Mammary epithelial cell (primary cell): ENCODE measurements at regions of chr6 and their contacts with region 1.

Region 1: DNA sequence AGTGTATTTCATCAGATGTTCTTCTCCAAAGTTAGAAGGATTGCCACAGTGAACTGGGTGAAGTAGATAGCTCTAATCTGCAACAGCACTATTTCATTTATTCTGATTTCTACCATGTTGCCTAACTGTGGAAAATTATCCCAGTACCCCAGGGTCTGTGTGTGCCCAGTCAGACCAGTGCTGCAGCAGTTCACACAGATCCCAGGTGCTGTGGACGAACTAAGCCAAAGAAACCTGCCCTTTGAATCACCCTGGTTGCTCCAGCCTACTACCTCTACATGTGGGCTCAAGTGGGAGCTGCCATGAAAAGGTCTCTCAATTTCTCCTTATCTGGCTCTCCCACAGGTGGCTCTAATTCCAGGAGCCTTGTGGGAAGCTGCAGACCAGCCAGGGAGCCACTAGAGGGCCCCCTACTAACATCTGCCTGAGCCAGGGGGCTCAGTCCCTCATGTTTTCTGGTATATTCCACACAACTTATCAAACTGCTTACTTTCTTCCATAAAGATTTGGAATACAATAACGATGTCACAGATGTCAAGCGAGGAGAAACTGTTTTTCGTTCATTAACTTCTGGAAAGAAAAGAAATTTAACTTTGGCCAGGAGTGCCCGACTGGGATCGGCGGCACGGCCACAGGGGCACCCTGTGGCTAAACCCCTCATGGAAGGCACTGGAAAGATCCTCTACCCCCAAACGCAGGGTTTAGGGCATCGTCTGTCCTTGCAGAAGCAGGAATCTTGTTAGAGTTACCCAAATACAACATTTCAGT is 31.6 kb upstream of the LY86 start:
- DNase-seq: no peak
- H3K4me3 ChIP-seq: no peak overlapping the region
- H3K27ac ChIP-seq: no peak overlapping the region
- H3K4me1 ChIP-seq: peaks cover 11% of the 10 kb centered on the region
- H3K27me3 ChIP-seq: no peaks in the 10 kb centered on the region
- CTCF ChIP-seq: peak; percentile 71 to 78

Region 2: DNA sequence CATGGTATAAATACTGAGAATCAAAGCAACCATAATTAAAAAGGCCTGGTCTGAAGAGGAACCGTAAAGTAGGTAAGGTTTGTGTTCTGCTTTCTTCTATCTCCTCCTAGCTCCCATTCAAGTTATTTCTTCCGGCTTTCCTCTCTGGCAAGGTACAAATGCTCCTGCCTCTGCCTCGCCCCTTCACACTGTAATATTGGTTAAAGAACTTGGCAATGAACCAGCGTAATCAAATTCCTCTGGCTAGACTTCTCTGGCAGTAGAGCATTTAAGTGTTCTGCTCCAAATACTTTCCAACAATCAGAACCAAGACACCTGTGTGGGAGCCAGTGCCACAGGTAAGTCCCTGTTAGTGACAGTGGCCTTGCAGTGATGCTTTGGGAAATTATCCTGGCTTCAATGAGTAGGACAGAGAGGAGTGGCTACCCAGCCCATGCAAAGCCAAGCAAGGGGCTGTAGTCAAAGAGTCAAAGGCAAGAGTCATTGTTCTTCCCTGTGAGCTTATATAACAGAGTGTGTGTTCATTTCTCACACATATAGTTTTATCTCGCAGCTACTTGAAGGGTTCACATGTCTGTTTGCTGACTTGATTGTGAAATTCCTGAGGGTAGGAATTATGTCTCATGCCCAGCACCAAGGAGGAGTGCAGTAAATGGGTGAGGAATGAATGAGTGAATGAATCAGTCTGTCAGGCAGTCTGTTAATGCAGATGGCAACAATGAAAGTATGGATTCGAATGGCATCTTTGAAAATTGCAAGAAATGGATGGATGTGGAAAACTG is 879.5 kb before region 1 on chr6:
- CTCF ChIA-PET with region 1: no interaction called
- dilution Hi-C with region 1: no loop called
- in situ Hi-C with region 1: no loop called
- intact Hi-C with region 1: loop called (anchors 5 kb)
- DNase-seq: peak; percentile 33
- H3K4me3 ChIP-seq: no peak overlapping the region
- H3K27ac ChIP-seq: peak overlapping the region; percentile 19
- H3K4me1 ChIP-seq: peaks cover 21% of the 10 kb centered on the region
- H3K27me3 ChIP-seq: no peaks in the 10 kb centered on the region
- CTCF ChIP-seq: peak in 1 of 2 donors; percentile 4

Region 3: GRCh38 chr6:7086488-7086887 is 529.6 kb after region 1 on chr6:
- CTCF ChIA-PET with region 1: no interaction called
- dilution Hi-C with region 1: no loop called
- in situ Hi-C with region 1: no loop called
- intact Hi-C with region 1: no loop called
- DNase-seq: no peak
- H3K4me3 ChIP-seq: peak overlapping the region in 2 of 3 experiments; percentile 26 to 43
- H3K27ac ChIP-seq: no peak overlapping the region
- H3K4me1 ChIP-seq: no peaks in the 10 kb centered on the region
- H3K27me3 ChIP-seq: no peaks in the 10 kb centered on the region
- CTCF ChIP-seq: no peak